ENCODE measurements at regions of chr11 and their contacts with region 1.

Region 1: DNA sequence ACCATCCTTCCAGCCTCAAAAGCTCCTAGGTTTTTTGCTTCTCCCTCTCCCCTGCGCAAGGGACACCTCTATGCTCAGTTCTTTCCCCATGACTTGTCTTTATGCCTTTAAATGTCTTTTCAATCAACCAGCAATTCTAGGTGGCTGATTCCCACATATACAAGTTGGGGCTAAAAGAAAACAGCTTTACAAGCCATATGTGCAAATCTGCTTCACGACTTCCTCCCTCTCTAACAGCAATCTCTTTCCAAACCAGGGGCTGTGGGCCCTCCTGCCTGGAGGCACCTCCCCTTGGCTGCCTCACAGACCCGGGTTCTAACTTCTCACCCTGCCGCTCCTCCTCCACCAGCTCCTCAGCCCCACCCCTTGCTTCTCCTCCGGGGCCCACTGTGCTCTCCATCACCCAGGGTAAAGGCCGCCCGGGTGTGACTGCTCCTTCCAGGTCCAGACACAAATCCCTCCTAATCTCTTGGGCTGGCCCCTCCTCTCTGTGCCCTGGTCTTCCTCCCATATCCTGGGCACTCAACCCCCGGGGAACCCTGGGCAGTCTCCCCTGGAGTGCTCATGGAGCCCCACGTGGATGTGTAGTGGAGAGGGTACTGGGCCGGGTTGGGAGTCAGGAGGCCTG is 14.1 kb downstream of the TMPRSS13 start:
- DNase-seq: no peak
- H3K4me3 Mint-ChIP-seq: no peak overlapping the region
- H3K27ac Mint-ChIP-seq: no peak overlapping the region
- H3K4me1 Mint-ChIP-seq: peaks cover 9% of the 10 kb centered on the region
- H3K27me3 Mint-ChIP-seq: no peaks in the 10 kb centered on the region

Region 2: GRCh38 chr11:117932067-117932370 is 16.9 kb after region 1 on chr11:
- intact Hi-C with region 1: loop called (anchors 2 kb)
- DNase-seq: peak; percentile 69
- H3K4me3 Mint-ChIP-seq: peak overlapping the region; percentile 26
- H3K27ac Mint-ChIP-seq: peak overlapping the region; percentile 82
- H3K4me1 Mint-ChIP-seq: peaks cover 42% of the 10 kb centered on the region
- H3K27me3 Mint-ChIP-seq: peaks cover 7% of the 10 kb centered on the region

Measured in activated CD4-positive, alpha-beta T cell treated with anti-CD3 and anti-CD28 coated beads, Interleukin-2, amount 10 ng/mL, durations not matched to agents 24 days and 14 days (primary cell).